ENCODE measurements at regions of chr1 and their contacts with region 1.

Region 1: DNA sequence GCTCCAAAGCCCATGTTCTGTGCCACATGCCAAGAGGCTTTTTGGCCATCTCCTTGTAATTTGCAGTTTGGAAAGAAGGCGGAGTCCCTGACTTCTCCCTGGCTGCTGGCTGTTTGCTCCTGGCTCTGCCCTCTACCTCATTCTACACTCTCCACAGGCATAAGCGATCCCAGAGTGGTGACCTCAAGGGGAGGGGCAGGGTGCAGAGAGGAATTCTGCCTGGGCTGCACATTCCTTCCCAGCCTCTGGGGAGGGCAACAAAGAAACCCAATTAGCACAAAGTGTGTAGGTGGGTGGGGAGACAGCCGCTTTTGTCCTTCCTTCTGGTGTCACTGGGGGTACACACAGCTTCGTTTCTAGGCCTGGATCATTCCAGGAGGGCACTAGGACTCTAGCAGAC is 95.3 kb downstream of the HIVEP3 start:
- DNase-seq: no peak
- ATAC-seq: no peak
- H3K4me3 Mint-ChIP-seq: no peak overlapping the region
- H3K27ac Mint-ChIP-seq: no peak overlapping the region
- H3K4me1 Mint-ChIP-seq: peaks cover 9% of the 10 kb centered on the region
- H3K27me3 Mint-ChIP-seq: no peaks in the 10 kb centered on the region

Region 2: GRCh38 chr1:41639332-41639936 is 184.0 kb before region 1 on chr1:
- CTCF ChIA-PET with region 1: no interaction called
- POLR2A ChIA-PET with region 1: no interaction called
- intact Hi-C with region 1: no loop called
- DNase-seq: peak; percentile 84
- ATAC-seq: peak; percentile 83
- H3K4me3 Mint-ChIP-seq: peak overlapping the region; percentile 62
- H3K27ac Mint-ChIP-seq: no peak overlapping the region
- H3K4me1 Mint-ChIP-seq: peaks cover 13% of the 10 kb centered on the region
- H3K27me3 Mint-ChIP-seq: no peaks in the 10 kb centered on the region

Region 3: DNA sequence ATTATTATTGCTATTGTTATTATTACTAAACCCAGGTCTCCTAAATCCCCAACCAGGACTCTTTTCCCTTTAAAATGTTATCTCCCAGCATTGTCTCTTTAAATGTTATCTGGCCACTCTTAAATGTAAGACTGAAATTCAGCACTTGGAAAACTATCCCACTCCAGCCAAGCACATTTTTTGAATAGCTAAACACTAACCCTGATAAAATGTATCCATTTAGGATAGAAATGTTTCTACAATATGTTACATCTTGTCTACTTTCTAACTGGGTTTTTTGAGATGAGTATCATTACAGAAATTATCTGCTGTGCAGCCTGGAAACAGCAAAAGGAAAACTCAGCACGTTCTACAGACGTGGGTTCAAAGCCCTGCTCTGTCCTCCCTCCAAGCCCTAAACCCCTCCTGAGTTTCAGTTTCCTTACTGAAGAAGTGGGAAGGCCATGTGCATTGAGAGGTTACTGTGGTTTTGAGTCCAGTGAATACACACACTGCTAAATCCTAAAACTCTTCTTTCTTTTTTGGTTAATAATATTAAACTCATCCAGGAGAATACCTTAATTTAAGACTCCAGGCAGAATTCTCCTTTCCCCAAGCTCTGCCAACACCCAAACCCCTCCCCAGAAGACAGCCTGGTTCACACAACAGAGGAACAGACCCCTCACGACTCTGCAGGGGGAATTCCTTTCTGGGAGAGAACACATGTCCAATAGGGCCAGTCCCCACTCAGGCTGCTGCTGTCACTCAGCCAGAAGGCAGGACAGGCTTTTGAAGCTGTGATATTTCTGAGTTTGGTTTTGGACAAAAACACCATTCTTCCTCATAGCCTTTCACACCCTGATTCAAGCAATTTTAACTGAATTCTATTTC is 53.3 kb after region 1 on chr1:
- CTCF ChIA-PET with region 1: no interaction called
- POLR2A ChIA-PET with region 1: no interaction called
- intact Hi-C with region 1: no loop called
- DNase-seq: no peak
- ATAC-seq: peak; percentile 47
- H3K4me3 Mint-ChIP-seq: no peak overlapping the region
- H3K27ac Mint-ChIP-seq: no peak overlapping the region
- H3K4me1 Mint-ChIP-seq: peaks cover 24% of the 10 kb centered on the region
- H3K27me3 Mint-ChIP-seq: no peaks in the 10 kb centered on the region

Region 4: GRCh38 chr1:42157667-42158066 is 334.2 kb after region 1 on chr1:
- CTCF ChIA-PET with region 1: no interaction called
- POLR2A ChIA-PET with region 1: no interaction called
- intact Hi-C with region 1: loop called in 1 of 2 experiments (anchors 10 kb)
- DNase-seq: peak; percentile 38
- ATAC-seq: peak; percentile 66
- H3K4me3 Mint-ChIP-seq: no peak overlapping the region
- H3K27ac Mint-ChIP-seq: no peak overlapping the region
- H3K4me1 Mint-ChIP-seq: peaks cover 4% of the 10 kb centered on the region
- H3K27me3 Mint-ChIP-seq: peaks cover 2% of the 10 kb centered on the region

Measured in activated CD4-positive, alpha-beta T cell treated with anti-CD3 and anti-CD28 coated beads for 36 hours (primary cell).